Heart right ventricle (tissue), 16 donors: ENCODE measurements at regions of chr1 and their contacts with region 1.

Region 1: DNA sequence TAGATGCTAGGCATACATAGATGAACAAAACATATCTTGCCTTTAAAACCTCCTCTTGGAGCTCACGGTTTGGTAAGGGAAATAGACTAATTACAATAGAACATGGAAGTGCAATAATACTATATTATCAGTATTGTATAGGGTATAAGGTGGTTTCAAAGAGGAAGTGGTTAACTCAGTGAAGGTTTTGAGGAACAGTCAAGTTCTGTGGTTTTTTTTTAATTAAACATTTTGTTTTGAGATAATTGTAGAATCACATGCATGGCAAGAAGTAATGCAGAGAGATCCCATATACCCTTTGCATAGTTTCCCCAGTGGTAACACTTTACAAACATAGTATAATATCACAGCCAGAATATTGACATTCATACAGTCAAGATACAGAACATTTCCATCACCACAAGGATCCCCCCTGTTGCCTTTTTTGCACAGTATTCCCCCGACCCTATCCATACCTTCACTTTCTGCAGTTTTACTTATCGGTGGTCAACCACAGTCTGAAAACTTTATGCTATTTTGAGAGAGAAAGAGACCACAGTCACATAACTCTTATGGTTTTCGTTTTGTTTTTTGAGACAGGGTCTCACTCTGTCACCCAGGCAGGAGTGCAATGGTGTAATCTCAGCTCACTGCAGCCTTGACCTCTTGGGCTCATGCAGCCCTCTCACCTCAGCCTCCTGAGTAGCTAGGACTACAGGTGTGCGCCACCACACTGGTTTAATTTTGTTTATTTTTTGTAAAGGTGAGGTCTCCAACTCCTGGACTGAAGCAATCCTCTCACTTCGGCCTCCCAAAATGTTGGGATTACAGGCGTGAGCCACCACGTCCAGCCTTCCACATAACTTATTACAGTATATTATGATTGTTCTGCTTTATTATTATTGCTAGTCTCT is 60.5 kb upstream of the KIAA1614 start:
- DNase-seq: no peak
- ATAC-seq: no peak
- H3K4me3 ChIP-seq: no peak overlapping the region
- H3K27ac ChIP-seq: no peak overlapping the region
- H3K4me1 ChIP-seq: peaks cover 0 to 43% (median 24%) of the 10 kb centered on the region in 9 donors
- H3K27me3 ChIP-seq: no peaks in the 10 kb centered on the region
- CTCF ChIP-seq: no peak

Region 2: GRCh38 chr1:180631766-180632325 is 220.4 kb before region 1 on chr1 and contains the start of gene XPR1:
- intact Hi-C with region 1: loop called in 6 of 10 experiments (anchors 5 to 10 kb)
- DNase-seq: peak; percentile 99
- ATAC-seq: peak; percentile 98 to 99 (median 99)
- H3K4me3 ChIP-seq: peak within 1 kb of the TSS; percentile 75 to 94 (median 86)
- H3K27ac ChIP-seq: peak within 1 kb of the TSS; percentile 90 to 98 (median 94)
- H3K4me1 ChIP-seq: peaks cover 0 to 51% (median 27%) of the 10 kb centered on the region in 9 donors
- H3K27me3 ChIP-seq: no peaks in the 10 kb centered on the region
- CTCF ChIP-seq: peak; percentile 13 to 55 (median 32)
- total RNA-seq, gene XPR1: 28.2 to 142 (median 78.7) TPM